Endothelial cell of umbilical vein (primary cell): ENCODE measurements at regions of chr2 and their contacts with region 1.

Region 1: GRCh38 chr2:18299423-18300212 is 260.8 kb downstream of the RDH14 start:
- DNase-seq: peak; percentile 94
- H3K4me3 ChIP-seq: peak overlapping the region; percentile 44 to 100 (median 99)
- H3K27ac ChIP-seq: peak overlapping the region; percentile 97
- H3K4me1 ChIP-seq: peaks cover 39% of the 10 kb centered on the region
- H3K27me3 ChIP-seq: no peaks in the 10 kb centered on the region
- CTCF ChIP-seq: no peak
- POLR2A ChIP-seq: peak; percentile 14

Region 2: DNA sequence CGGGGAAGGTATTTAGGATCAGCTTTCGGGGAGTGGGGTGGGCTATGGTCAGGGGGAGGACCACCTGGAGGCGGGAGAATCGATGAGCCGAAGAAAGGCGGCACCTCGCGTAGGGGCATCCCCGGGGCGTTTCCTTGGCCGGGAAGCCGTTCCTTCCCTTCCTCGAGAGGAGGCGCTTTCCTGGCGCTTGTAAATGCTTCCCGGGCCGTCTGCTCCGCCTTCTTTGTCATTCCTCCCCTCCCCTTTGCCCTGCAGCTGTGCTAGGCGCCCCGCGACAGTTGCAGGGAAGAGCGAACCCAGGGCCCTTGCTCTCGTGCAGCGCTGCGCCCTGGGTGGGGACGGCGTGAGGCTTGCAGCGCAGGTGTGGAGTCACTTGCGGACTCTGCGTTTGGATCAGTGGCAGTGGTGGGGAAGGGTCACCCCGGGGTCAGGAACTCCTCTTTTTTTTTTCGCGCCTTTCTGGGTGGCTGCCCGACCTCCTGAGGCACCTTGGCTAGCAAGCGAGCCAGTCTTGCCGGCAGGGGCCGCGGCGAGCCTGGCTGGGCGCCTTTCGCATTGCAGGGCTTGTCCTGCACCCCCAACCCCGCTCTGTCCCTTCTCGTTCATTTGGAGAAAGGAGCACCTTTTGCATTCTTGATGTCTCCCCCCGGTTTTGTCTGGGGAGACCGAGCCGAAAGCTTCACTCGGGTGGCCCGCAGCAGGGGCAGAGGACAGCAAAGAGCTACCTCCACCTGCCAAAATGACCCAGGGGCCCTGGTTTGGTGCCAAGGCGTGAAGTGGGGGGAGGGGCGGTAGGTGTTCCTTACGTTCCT is 420.3 kb before region 1 on chr2:
- CTCF ChIA-PET with region 1: no interaction called
- POLR2A ChIA-PET with region 1: no interaction called
- dilution Hi-C with region 1: no loop called
- intact Hi-C with region 1: loop called (anchors 10 kb)
- DNase-seq: peak; percentile 7
- H3K4me3 ChIP-seq: peak overlapping the region in 2 of 3 experiments; percentile 6 to 43
- H3K27ac ChIP-seq: no peak overlapping the region
- H3K4me1 ChIP-seq: peaks cover 4% of the 10 kb centered on the region
- H3K27me3 ChIP-seq: peaks cover 21 to 50% of the 10 kb centered on the region in 2 experiments
- CTCF ChIP-seq: peak in 1 of 2 donors; percentile 5
- POLR2A ChIP-seq: no peak

Region 3: DNA sequence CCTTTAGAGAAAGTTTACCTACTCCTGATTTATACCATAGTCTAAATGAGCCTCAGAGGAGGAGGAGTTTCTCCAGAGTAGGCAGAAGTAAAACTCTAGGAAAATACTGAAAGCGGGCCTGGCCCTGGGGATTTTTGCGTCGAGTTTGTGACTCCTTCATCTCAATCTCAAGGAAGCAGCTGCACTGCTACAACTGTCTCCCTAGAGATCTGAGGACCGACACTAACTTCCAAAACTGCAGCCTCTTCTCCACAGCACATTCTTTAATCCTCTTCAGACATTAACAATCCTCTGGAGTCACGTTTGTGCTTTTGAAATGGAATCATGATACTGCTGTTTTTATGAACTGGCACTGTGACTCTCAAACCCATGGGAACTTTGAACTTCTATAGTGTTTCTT is 139.7 kb before region 1 on chr2:
- CTCF ChIA-PET with region 1: no interaction called
- POLR2A ChIA-PET with region 1: no interaction called
- dilution Hi-C with region 1: no loop called
- intact Hi-C with region 1: no loop called
- DNase-seq: no peak
- H3K4me3 ChIP-seq: no peak overlapping the region
- H3K27ac ChIP-seq: no peak overlapping the region
- H3K4me1 ChIP-seq: no peaks in the 10 kb centered on the region
- H3K27me3 ChIP-seq: no peaks in the 10 kb centered on the region
- CTCF ChIP-seq: no peak
- POLR2A ChIP-seq: no peak

Region 4: DNA sequence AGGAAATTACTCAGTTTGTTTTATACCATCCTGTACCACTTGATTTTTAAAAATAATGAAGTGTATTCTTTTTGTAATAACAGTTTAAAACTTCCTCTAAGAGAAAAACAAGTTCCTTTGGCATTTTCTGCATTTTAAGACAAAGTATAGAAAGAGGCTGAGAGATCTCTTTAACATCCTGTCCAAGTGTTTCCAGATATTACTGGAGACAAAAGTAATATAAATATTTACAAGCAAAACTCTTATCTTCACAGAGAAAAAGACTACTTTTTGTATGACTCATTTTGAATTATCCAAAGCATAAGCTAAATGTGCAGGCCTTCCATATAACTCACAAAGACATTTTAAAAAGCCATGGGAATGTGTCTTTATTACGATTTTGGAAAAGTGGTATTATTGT is 39.7 kb after region 1 on chr2:
- CTCF ChIA-PET with region 1: no interaction called
- POLR2A ChIA-PET with region 1: no interaction called
- dilution Hi-C with region 1: no loop called
- intact Hi-C with region 1: loop called (anchors 1 kb)
- DNase-seq: peak; percentile 78
- H3K4me3 ChIP-seq: no peak overlapping the region
- H3K27ac ChIP-seq: peak overlapping the region; percentile 58
- H3K4me1 ChIP-seq: peaks cover 36% of the 10 kb centered on the region
- H3K27me3 ChIP-seq: no peaks in the 10 kb centered on the region
- CTCF ChIP-seq: no peak
- POLR2A ChIP-seq: no peak

Region 5: GRCh38 chr2:18378020-18378653 is 78.5 kb after region 1 on chr2:
- CTCF ChIA-PET with region 1: interaction called, 42 read pairs
- POLR2A ChIA-PET with region 1: no interaction called
- dilution Hi-C with region 1: no loop called
- intact Hi-C with region 1: loop called (anchors 1 kb)
- DNase-seq: peak; percentile 54
- H3K4me3 ChIP-seq: no peak overlapping the region
- H3K27ac ChIP-seq: no peak overlapping the region
- H3K4me1 ChIP-seq: peaks cover 9% of the 10 kb centered on the region
- H3K27me3 ChIP-seq: no peaks in the 10 kb centered on the region
- CTCF ChIP-seq: peak; percentile 68 to 77
- POLR2A ChIP-seq: no peak

Region 6: GRCh38 chr2:19362755-19363473 is 1063.3 kb after region 1 on chr2:
- CTCF ChIA-PET with region 1: no interaction called
- POLR2A ChIA-PET with region 1: no interaction called
- dilution Hi-C with region 1: no loop called
- intact Hi-C with region 1: loop called (anchors 10 kb)
- DNase-seq: peak; percentile 67
- H3K4me3 ChIP-seq: peak overlapping the region; percentile 22 to 88 (median 48)
- H3K27ac ChIP-seq: no peak overlapping the region
- H3K4me1 ChIP-seq: peaks cover 18% of the 10 kb centered on the region
- H3K27me3 ChIP-seq: peaks cover 72 to 75% of the 10 kb centered on the region in 2 experiments
- CTCF ChIP-seq: peak; percentile 84 to 88
- POLR2A ChIP-seq: no peak